ENCODE measurements at regions of chr7 and their contacts with region 1.

Region 1: DNA sequence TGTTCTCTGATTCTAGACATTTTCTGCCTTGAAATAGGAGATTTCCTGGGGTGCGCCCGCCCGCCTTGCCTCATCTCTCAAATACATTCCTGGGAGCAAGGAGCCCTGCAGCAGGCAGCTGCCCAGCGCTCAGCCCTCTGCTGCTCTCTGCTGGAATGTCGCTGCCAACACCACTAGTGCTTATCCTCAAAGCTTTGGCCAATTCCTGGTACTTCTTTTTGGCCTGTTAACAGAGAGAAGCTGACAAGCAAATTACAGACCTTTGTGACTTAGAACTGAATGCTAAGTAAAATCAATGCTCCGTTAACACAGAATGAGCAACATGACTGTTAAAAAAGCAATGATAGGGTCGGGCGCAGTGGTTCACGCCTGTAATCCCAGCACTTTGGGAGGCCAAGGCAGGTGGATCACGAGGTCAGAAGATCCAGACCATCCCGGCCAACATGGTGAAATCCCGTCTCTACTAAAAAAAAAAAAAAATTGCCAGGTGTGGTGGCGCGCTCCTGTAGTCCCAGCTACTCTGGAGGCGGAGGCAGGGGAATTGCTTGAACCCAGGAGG is 41.9 kb upstream of the SYPL1 start:
- DNase-seq: peak; percentile 63 to 89
- H3K4me3 ChIP-seq: no peak overlapping the region
- H3K27ac ChIP-seq: no peak overlapping the region
- H3K4me1 ChIP-seq: no peaks in the 10 kb centered on the region; a peak in 1 of 7 replicates
- H3K27me3 ChIP-seq: no peaks in the 10 kb centered on the region
- CTCF ChIP-seq: peak; percentile 91 to 96 (median 95)
- EP300 ChIP-seq: no peak
- POLR2A ChIP-seq: no peak
- RAD21 ChIP-seq: peak; percentile 99

Region 2: GRCh38 chr7:106050011-106050745 is 103.8 kb before region 1 on chr7:
- CTCF ChIA-PET with region 1: interaction called, 154 read pairs
- POLR2A ChIA-PET with region 1: no interaction called
- DNase-seq: no peak
- H3K4me3 ChIP-seq: no peak overlapping the region
- H3K27ac ChIP-seq: no peak overlapping the region
- H3K4me1 ChIP-seq: peaks cover 0 to 8% (median under 1%) of the 10 kb centered on the region in 4 experiments; a peak in 3 of 7 replicates
- H3K27me3 ChIP-seq: no peaks in the 10 kb centered on the region
- CTCF ChIP-seq: peak; percentile 45 to 52 (median 49)
- EP300 ChIP-seq: no peak
- POLR2A ChIP-seq: no peak
- RAD21 ChIP-seq: peak; percentile 49 to 57

Region 3: DNA sequence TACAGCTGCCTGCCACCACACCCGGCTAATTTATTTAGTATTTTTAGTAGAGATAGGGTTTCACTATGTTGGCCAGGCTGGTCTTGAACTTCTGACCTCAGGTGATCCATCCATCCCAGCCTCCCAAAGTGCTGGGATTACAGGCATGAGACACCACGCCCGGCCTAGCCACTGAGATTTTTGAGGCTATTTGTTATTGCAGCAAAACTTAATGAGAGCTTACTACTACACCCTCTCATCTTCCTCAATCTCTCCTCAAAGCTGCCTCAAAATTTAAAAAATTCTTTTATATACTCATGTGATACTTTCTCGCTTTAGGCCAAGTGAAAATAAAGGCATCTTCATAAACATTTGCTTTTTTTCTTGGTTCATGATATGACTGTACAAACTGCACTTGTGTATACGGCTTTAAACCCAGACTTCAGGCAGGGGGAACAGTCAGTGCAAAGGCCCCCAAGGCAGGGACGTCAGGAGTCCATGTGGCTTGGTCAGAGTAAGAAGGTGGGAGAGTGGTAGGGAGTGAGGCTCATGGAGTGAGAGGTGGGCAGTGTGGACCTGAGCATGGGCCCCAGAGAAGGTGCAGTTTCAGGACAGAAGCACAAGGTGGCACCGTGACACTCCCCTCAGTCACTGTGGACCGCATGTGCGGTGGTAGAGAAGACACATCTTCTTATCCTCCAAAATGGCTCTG is 97.3 kb before region 1 on chr7:
- CTCF ChIA-PET with region 1: interaction called, 154 read pairs
- POLR2A ChIA-PET with region 1: no interaction called
- DNase-seq: peak in 1 of 2 experiments; percentile 71
- H3K4me3 ChIP-seq: no peak overlapping the region
- H3K27ac ChIP-seq: no peak overlapping the region
- H3K4me1 ChIP-seq: peaks cover 0 to 5% (median 2%) of the 10 kb centered on the region in 4 experiments; a peak in 3 of 7 replicates
- H3K27me3 ChIP-seq: no peaks in the 10 kb centered on the region
- CTCF ChIP-seq: peak; percentile 83 to 95 (median 91)
- EP300 ChIP-seq: no peak
- POLR2A ChIP-seq: no peak
- RAD21 ChIP-seq: peak; percentile 88 to 92

Region 4: GRCh38 chr7:106071356-106071998 is 82.5 kb before region 1 on chr7:
- CTCF ChIA-PET with region 1: interaction called, 154 read pairs
- POLR2A ChIA-PET with region 1: no interaction called
- DNase-seq: no peak
- H3K4me3 ChIP-seq: no peak overlapping the region
- H3K27ac ChIP-seq: no peak overlapping the region
- H3K4me1 ChIP-seq: peaks cover 0 to 4% (median 2%) of the 10 kb centered on the region in 4 experiments; a peak in 1 of 7 replicates
- H3K27me3 ChIP-seq: no peaks in the 10 kb centered on the region
- CTCF ChIP-seq: no peak
- EP300 ChIP-seq: no peak
- POLR2A ChIP-seq: no peak
- RAD21 ChIP-seq: no peak

Region 5: GRCh38 chr7:106080300-106080987 is 73.5 kb before region 1 on chr7:
- CTCF ChIA-PET with region 1: interaction called, 13 read pairs
- POLR2A ChIA-PET with region 1: no interaction called
- DNase-seq: no peak
- H3K4me3 ChIP-seq: no peak overlapping the region
- H3K27ac ChIP-seq: no peak overlapping the region
- H3K4me1 ChIP-seq: no peaks in the 10 kb centered on the region
- H3K27me3 ChIP-seq: no peaks in the 10 kb centered on the region
- CTCF ChIP-seq: no peak
- EP300 ChIP-seq: no peak
- POLR2A ChIP-seq: no peak
- RAD21 ChIP-seq: no peak

Region 6: GRCh38 chr7:106139265-106140251 is 14.4 kb before region 1 on chr7:
- CTCF ChIA-PET with region 1: interaction called, 16 read pairs
- POLR2A ChIA-PET with region 1: interaction called, 5 read pairs
- DNase-seq: no peak
- H3K4me3 ChIP-seq: no peak overlapping the region
- H3K27ac ChIP-seq: no peak overlapping the region; the same call in 1 of the 2 replicates
- H3K4me1 ChIP-seq: peaks cover 0 to 4% (median 1%) of the 10 kb centered on the region in 4 experiments; a peak in 2 of 7 replicates
- H3K27me3 ChIP-seq: no peaks in the 10 kb centered on the region
- CTCF ChIP-seq: no peak
- EP300 ChIP-seq: no peak
- POLR2A ChIP-seq: peak in 1 of 2 experiments; percentile 37; a peak in 1 of 3 replicates
- RAD21 ChIP-seq: no peak

Region 7: GRCh38 chr7:106166655-106167342 is 12.8 kb after region 1 on chr7:
- CTCF ChIA-PET with region 1: interaction called, 108 read pairs
- POLR2A ChIA-PET with region 1: no interaction called
- DNase-seq: no peak
- H3K4me3 ChIP-seq: no peak overlapping the region
- H3K27ac ChIP-seq: no peak overlapping the region
- H3K4me1 ChIP-seq: no peaks in the 10 kb centered on the region
- H3K27me3 ChIP-seq: no peaks in the 10 kb centered on the region
- CTCF ChIP-seq: peak in 2 of 3 experiments; percentile 61 to 80; a peak in 2 of 4 replicates
- EP300 ChIP-seq: no peak
- POLR2A ChIP-seq: no peak
- RAD21 ChIP-seq: peak; percentile 81 to 82

Region 8: DNA sequence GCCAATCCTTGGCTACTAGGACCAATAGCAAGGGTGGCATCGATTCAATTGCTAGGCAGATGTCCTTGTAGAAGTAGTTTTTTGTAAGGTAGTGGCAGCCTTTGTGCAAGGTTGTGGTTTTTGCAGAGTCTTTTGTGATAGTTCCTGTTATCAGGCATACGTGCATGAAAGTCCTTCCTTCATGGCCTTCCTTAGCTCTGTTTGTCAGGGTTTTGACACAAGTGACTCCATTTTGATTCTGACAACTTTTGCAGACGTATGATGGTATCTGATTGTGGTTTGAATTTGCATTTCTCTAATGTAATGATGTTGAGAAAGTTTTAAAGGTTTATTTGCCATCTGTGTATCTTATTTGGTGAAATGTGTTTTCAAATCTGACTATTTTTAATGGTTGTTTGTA is 30.0 kb after region 1 on chr7:
- CTCF ChIA-PET with region 1: no interaction called
- POLR2A ChIA-PET with region 1: no interaction called
- DNase-seq: no peak
- H3K4me3 ChIP-seq: no peak overlapping the region
- H3K27ac ChIP-seq: no peak overlapping the region
- H3K4me1 ChIP-seq: no peaks in the 10 kb centered on the region
- H3K27me3 ChIP-seq: no peaks in the 10 kb centered on the region
- CTCF ChIP-seq: no peak
- EP300 ChIP-seq: no peak
- POLR2A ChIP-seq: no peak
- RAD21 ChIP-seq: no peak

Region 9: DNA sequence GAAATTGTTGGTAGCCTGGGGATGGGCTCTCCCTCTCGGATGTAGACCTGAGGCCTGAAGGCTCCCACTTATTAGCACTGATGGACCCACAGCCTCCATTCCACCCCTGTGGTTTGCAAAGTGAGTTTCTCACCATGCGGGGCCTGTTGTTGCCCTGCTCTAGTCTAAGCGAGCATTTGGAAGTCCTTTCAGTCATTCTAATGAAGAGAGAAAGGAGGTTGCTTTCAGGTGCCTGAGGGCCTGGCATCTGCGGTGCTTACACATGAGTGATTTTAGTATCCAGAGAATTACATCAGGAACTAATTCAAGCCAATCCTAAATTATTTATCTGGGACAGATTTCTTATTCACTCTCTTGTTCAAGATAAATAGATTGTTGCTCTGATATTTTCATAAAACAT is 69.2 kb after region 1 on chr7:
- CTCF ChIA-PET with region 1: no interaction called
- POLR2A ChIA-PET with region 1: no interaction called
- DNase-seq: no peak
- H3K4me3 ChIP-seq: no peak overlapping the region
- H3K27ac ChIP-seq: no peak overlapping the region
- H3K4me1 ChIP-seq: no peaks in the 10 kb centered on the region
- H3K27me3 ChIP-seq: no peaks in the 10 kb centered on the region
- CTCF ChIP-seq: no peak
- EP300 ChIP-seq: no peak
- POLR2A ChIP-seq: no peak
- RAD21 ChIP-seq: no peak